ENCODE measurements at regions of chr16 and their contacts with region 1.

Region 1: GRCh38 chr16:11139326-11140097 is 116.5 kb downstream of the SOCS1 start:
- DNase-seq: no peak
- H3K4me3 Mint-ChIP-seq: peak overlapping the region; percentile 71
- H3K27ac Mint-ChIP-seq: peak overlapping the region; percentile 96
- H3K4me1 Mint-ChIP-seq: peaks cover 69% of the 10 kb centered on the region
- H3K27me3 Mint-ChIP-seq: no peaks in the 10 kb centered on the region

Region 2: GRCh38 chr16:10828851-10829731 is 310.4 kb before region 1 on chr16:
- intact Hi-C with region 1: no loop called
- DNase-seq: no peak
- H3K4me3 Mint-ChIP-seq: no peak overlapping the region
- H3K27ac Mint-ChIP-seq: no peak overlapping the region
- H3K4me1 Mint-ChIP-seq: no peaks in the 10 kb centered on the region
- H3K27me3 Mint-ChIP-seq: peaks cover 16% of the 10 kb centered on the region

Region 3: DNA sequence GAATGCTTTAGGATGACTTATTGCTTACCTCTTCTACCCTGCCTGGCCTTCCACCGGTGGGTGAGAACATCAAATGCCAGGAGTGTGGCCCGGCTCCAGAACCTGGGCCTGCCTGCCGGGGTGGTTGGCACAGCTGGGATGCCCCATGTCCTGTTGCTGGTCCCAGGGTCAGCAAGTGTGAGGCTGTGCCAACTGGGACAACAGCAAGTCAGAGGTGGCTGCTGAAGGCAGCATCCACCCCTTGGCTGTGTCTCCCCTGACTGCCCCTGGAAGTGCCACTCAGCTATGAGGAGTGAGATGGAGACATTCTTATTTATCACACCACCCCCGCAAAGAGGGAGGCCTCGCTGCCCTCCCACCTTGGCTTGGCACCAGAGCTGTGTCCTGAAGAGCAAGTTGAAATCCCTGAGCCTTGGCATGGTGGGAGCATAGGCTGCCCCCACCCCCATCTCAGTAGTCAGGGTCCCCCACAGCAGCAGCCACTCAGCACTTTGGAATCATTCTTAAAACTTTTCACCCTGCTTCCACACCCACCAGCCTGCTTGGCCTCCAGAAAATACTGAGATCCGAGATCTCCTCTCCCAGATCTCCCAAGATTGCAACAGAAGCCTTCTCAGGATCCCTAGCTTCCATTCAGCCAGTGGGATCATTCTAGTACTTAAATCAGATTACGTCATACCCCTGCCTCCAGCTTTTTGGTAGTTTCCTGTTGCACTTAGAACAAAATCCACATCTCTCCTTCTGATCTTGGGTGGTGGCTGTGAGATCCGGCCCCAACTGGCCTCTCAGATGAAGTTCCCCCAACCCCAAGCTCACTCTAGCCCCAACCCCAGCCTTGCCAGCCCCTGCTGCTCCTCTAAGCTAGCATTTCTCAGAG is 11.0 kb before region 1 on chr16:
- intact Hi-C with region 1: no loop called
- DNase-seq: peak; percentile 38
- H3K4me3 Mint-ChIP-seq: peak overlapping the region; percentile 60
- H3K27ac Mint-ChIP-seq: peak overlapping the region; percentile 96
- H3K4me1 Mint-ChIP-seq: peaks cover 76% of the 10 kb centered on the region
- H3K27me3 Mint-ChIP-seq: no peaks in the 10 kb centered on the region

Region 4: GRCh38 chr16:11155284-11155806 is 15.8 kb after region 1 on chr16:
- intact Hi-C with region 1: loop called (anchors 2 kb)
- DNase-seq: peak; percentile 47
- H3K4me3 Mint-ChIP-seq: peak overlapping the region; percentile 42
- H3K27ac Mint-ChIP-seq: peak overlapping the region; percentile 89
- H3K4me1 Mint-ChIP-seq: peaks cover 64% of the 10 kb centered on the region
- H3K27me3 Mint-ChIP-seq: no peaks in the 10 kb centered on the region

Measured in activated T-helper 2 cell treated with anti-CD3 and anti-CD28 coated beads, Interferon-gamma antibody, Interleukin-2, Interleukin-4, amounts not matched to agents 10 μg/mL and 5 μg/mL and 100 μg/mL, durations not matched to agents 14 hours and 24 hours and 36 hours (primary cell).